Activated CD4-positive, alpha-beta T cell treated with anti-CD3 and anti-CD28 coated beads for 36 hours (primary cell): ENCODE measurements at regions of chr3 and their contacts with region 1.

Region 1: GRCh38 chr3:125594581-125595011 is 701 bp downstream of the OSBPL11 start:
- DNase-seq: peak; percentile 42
- ATAC-seq: no peak
- H3K4me3 Mint-ChIP-seq: peak overlapping the region; percentile 92
- H3K27ac Mint-ChIP-seq: peak overlapping the region; percentile 91
- H3K4me1 Mint-ChIP-seq: peaks cover 24% of the 10 kb centered on the region
- H3K27me3 Mint-ChIP-seq: no peaks in the 10 kb centered on the region

Region 2: DNA sequence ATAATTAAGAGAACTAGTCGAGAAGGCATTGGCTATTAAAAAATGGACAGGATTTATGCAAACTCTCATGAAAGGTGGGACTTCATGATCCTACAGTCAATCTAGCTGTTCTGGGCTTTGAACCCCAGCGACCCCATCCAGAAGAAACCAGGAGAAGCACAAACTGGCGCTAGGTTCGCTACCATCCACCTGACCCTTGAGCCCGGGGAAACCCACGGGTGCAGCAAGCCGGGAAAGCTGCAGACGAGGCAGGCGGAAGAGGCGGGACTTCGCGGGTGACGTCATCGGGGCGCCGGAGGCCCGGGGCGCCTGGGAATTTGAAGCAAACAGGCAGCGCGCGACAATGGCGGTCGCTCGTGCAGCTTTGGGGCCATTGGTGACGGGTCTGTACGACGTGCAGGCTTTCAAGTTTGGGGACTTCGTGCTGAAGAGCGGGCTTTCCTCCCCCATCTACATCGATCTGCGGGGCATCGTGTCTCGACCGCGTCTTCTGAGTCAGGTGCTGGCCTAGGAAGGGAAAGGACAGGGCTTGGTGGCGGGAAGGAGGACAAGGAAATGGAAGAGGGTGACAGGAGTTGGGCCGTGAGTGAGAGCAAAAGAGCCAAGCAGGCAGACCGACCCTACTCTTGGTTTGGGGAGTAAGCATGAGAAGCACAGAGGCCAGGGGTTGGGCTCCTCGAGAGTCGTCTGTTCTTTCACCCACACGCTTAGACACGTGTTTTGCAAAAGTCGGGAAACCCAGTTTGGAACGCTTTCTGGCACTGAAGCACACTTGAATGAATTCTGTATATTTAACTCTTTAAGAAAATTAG is 864.3 kb before region 1 on chr3 and contains the start of gene UMPS:
- CTCF ChIA-PET with region 1: no interaction called
- POLR2A ChIA-PET with region 1: no interaction called
- intact Hi-C with region 1: loop called in 1 of 2 experiments (anchors 1 kb)
- DNase-seq: peak; percentile 97
- ATAC-seq: peak; percentile 99
- H3K4me3 Mint-ChIP-seq: peak within 1 kb of the TSS; percentile 100
- H3K27ac Mint-ChIP-seq: peak within 1 kb of the TSS; percentile 100
- H3K4me1 Mint-ChIP-seq: peaks cover 32% of the 10 kb centered on the region
- H3K27me3 Mint-ChIP-seq: peaks cover 7% of the 10 kb centered on the region
- total RNA-seq, gene UMPS: 35.9 to 42.4 TPM

Region 3: DNA sequence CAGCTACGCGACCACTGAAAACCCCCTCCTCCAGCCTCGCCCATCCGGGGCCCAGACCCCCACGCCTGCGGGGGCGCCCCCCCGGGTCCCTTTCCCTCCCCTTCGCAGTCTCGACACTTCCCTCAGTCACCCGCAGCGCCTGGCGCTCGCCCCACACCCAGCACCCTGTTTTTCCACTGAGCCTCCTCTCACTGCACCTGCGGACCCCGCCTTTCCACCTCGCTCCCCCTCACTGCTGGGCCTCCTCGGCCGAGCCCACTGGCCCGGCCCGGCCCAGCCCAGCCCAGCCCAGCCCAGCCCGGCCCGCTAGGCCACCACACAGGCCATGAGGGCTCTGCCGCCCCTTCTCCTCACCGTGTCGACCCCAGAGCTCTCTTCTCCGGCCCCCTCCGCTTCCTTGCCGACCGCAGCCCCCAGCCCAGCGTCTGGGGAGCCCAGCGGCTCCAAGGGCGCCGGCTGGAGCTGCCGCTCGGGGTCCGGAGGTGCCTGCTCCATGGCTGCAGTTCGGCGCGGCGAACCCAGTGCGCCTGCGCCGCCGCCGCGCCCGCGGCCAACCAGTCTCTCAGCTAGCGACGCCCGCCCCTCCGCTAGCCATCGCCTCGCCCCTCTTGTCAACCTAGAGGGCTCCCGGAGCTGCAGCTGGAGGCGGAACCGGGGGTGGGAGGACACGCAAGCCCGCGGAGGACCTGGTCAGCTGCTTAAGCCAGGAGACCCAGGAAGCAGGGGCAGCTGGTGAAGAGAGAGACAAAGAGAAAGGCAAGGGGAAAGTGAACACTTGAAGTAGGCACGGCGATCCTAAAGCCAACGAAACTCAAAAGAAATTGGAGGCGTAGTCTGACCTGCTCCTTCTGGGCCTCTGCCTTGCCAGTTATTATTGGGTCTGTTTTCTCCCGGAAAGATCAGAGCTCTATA is 74.7 kb before region 1 on chr3 and contains the start of gene SNX4:
- CTCF ChIA-PET with region 1: no interaction called
- POLR2A ChIA-PET with region 1: interaction called, 3 read pairs
- intact Hi-C with region 1: loop called (anchors 1 to 2 kb)
- DNase-seq: peak; percentile 93
- ATAC-seq: peak; percentile 99
- H3K4me3 Mint-ChIP-seq: peak within 1 kb of the TSS; percentile 85
- H3K27ac Mint-ChIP-seq: peak within 1 kb of the TSS; percentile 93
- H3K4me1 Mint-ChIP-seq: peaks cover 37% of the 10 kb centered on the region
- H3K27me3 Mint-ChIP-seq: no peaks in the 10 kb centered on the region
- total RNA-seq, gene SNX4: 36.2 to 36.3 TPM